Tibial artery (tissue), 4 donors: ENCODE measurements at regions of chr9 and their contacts with region 1.

Region 1: GRCh38 chr9:6197330-6197729 is 18.3 kb upstream of the IL33 start:
- DNase-seq: no peak
- H3K4me3 ChIP-seq: no peak overlapping the region
- H3K27ac ChIP-seq: no peak overlapping the region
- H3K4me1 ChIP-seq: no peaks in the 10 kb centered on the region
- H3K27me3 ChIP-seq: no peaks in the 10 kb centered on the region
- CTCF ChIP-seq: peak; percentile 54 to 56

Region 2: GRCh38 chr9:5735072-5735471 is 462.3 kb before region 1 on chr9:
- intact Hi-C with region 1: no loop called
- DNase-seq: no peak
- H3K4me3 ChIP-seq: no peak overlapping the region
- H3K27ac ChIP-seq: no peak overlapping the region
- H3K4me1 ChIP-seq: no peaks in the 10 kb centered on the region
- H3K27me3 ChIP-seq: no peaks in the 10 kb centered on the region
- CTCF ChIP-seq: no peak

Region 3: DNA sequence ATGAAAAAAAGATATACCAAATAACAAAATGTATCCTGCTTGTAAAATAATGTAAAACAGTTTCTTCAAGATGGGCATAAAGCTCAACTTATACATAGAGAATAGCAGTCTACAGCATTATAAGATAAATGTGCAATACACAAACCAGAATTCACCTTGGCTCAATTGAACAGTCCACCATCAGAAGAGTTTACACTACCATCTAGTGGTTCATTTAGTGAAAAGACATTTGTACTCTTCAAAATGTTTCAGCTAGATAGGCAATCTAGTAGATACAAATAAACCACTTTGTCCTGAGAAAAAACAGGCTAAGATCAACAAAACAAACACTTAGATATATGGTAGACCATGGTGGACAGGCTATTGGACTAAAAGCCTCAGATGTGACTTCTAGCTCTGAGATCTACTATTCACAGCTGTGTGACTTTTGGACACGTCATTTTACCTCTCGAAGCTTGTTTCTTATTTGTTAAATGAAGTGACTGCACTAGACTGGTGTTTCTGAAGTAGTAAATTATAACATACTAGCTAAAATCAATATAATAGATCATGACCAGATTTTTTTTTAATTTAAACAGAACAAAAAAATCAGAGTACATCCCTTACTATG is 108.7 kb after region 1 on chr9:
- intact Hi-C with region 1: loop called (anchors 5 kb)
- DNase-seq: no peak
- H3K4me3 ChIP-seq: no peak overlapping the region
- H3K27ac ChIP-seq: no peak overlapping the region
- H3K4me1 ChIP-seq: no peaks in the 10 kb centered on the region
- H3K27me3 ChIP-seq: no peaks in the 10 kb centered on the region
- CTCF ChIP-seq: peak; percentile 54 to 69